ENCODE measurements at regions of chr10 and their contacts with region 1.

Region 1: GRCh38 chr10:44959247-44960087 is at the start of gene RASSF4:
- DNase-seq: peak; percentile 76 to 85 (median 79)
- H3K4me3 ChIP-seq: peak within 1 kb of the TSS; percentile 83 to 96 (median 91)
- H3K4me3 Mint-ChIP-seq: peak within 1 kb of the TSS; percentile 90 to 99
- H3K27ac ChIP-seq: peak within 1 kb of the TSS; percentile 77 to 81
- H3K27ac Mint-ChIP-seq: peak within 1 kb of the TSS; percentile 83 to 96 (median 95)
- H3K4me1 ChIP-seq: peaks cover 72 to 85% of the 10 kb centered on the region in 2 donors
- H3K4me1 Mint-ChIP-seq: peaks cover 80% of the 10 kb centered on the region
- H3K27me3 ChIP-seq: no peaks in the 10 kb centered on the region
- H3K27me3 Mint-ChIP-seq: peaks cover 0 to 1% (median 0%) of the 10 kb centered on the region in 3 donors
- CTCF ChIP-seq: no peak
- polyA plus RNA-seq, gene RASSF4: 117 to 290 (median 120) TPM

Region 2: GRCh38 chr10:44908066-44908749 is 51.3 kb before region 1 on chr10:
- intact Hi-C with region 1: no loop called
- DNase-seq: no peak
- H3K4me3 ChIP-seq: no peak overlapping the region
- H3K4me3 Mint-ChIP-seq: no peak overlapping the region
- H3K27ac ChIP-seq: no peak overlapping the region
- H3K27ac Mint-ChIP-seq: peak overlapping the region in 1 of 7 donors; percentile 21
- H3K4me1 ChIP-seq: peaks cover 12 to 26% of the 10 kb centered on the region in 2 donors
- H3K4me1 Mint-ChIP-seq: peaks cover 26% of the 10 kb centered on the region
- H3K27me3 ChIP-seq: no peaks in the 10 kb centered on the region
- H3K27me3 Mint-ChIP-seq: peaks cover 0 to 5% (median 2%) of the 10 kb centered on the region in 3 donors
- CTCF ChIP-seq: no peak

Region 3: DNA sequence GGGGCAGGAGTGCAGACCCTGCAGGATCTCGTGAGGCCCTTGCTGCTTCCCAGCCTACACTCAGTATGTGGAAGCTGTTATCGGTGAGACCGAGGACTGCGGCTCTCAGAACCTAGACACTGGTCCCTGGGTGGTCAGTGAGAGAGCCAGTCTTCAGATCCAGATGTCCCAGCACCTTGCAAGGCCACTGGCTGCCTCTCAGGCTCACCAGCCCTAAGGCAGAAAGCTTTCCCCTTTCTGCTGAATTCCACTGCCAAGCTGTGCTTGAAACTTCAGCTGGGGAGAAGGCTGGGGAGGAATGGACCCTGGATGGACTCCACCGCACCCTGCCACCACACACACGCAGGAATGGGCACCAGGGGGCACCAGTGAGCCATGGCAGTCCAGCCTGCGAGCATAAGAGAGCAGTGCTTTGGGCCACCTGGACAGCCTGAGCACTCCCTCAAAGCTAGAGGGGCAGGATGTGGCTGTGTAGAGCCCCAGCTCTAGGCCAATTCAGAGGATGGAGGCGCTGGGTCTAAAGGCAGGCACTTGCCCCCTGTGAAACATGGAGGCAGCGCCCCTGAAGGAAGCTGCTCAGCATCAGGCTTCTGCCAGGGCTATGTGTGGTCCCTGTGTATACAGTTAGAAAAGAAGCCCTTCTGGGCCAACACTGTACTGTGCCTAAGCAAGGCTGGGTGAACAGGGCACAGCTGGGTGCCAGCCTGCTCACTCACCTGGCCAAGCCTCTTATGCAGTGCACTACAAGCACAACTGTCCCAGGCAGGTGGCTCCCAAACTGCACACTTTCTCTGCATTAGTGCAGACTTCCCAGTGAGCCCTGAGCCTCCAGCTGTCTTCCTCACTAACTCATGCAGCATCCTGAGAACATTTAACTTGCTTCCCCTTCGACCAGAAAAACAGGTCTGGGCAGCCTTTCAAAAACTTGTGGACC is 26.7 kb before region 1 on chr10:
- intact Hi-C with region 1: no loop called
- DNase-seq: peak; percentile 74 to 81 (median 79)
- H3K4me3 ChIP-seq: no peak overlapping the region
- H3K4me3 Mint-ChIP-seq: no peak overlapping the region
- H3K27ac ChIP-seq: no peak overlapping the region
- H3K27ac Mint-ChIP-seq: peak overlapping the region in 2 of 7 donors; percentile 60 to 64
- H3K4me1 ChIP-seq: peaks cover 54 to 58% of the 10 kb centered on the region in 2 donors
- H3K4me1 Mint-ChIP-seq: peaks cover 51% of the 10 kb centered on the region
- H3K27me3 ChIP-seq: no peaks in the 10 kb centered on the region
- H3K27me3 Mint-ChIP-seq: peaks cover 0 to 5% (median 0%) of the 10 kb centered on the region in 3 donors
- CTCF ChIP-seq: peak; percentile 97

Region 4: DNA sequence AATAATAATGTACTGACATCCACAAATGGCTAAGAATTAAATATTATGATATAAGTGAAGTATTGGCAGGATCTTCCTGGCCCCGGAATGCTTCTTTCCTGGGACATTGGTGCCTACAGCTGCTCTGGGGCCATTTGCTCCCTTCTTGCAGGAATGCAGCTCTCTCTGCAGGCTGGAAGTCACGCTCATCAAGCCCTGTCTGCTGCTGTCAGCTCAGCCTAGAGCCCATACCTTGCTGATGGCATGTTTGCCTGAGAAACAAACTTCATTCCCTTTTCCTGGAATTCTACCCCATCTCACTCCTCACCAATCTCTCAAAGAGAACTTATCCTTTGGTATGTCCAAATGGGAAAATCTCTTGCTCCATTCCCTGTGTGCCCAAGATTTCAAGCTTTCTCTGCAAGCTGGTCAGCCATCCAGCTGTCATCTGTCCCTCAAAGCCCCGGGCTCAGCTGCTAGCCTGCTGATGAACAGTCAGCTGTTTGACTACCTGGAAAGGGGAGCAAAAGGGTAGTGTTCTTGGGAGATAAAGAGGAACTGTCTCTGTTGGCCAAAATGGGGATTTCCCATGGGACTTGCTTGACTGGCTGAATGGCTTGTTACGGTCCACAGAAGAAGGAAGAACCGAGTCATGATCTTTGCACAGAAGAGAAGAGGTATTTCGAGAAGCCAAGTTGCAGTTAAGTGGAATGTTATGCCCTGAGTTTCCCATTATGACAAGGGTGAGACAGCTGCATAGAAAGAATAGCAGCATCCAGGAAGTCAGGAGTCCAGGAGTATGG is 11.9 kb before region 1 on chr10:
- intact Hi-C with region 1: loop called in 1 of 2 experiments (anchors 2 kb)
- DNase-seq: peak; percentile 77 to 96 (median 83)
- H3K4me3 ChIP-seq: peak overlapping the region in 1 of 3 experiments; percentile 38
- H3K4me3 Mint-ChIP-seq: peak overlapping the region in 1 of 2 donors; percentile 69
- H3K27ac ChIP-seq: peak overlapping the region; percentile 66 to 76
- H3K27ac Mint-ChIP-seq: peak overlapping the region; percentile 69 to 93 (median 89)
- H3K4me1 ChIP-seq: peaks cover 52 to 59% of the 10 kb centered on the region in 2 donors
- H3K4me1 Mint-ChIP-seq: peaks cover 60% of the 10 kb centered on the region
- H3K27me3 ChIP-seq: no peaks in the 10 kb centered on the region
- H3K27me3 Mint-ChIP-seq: peaks cover 0 to 4% (median 0%) of the 10 kb centered on the region in 3 donors
- CTCF ChIP-seq: no peak

Region 5: DNA sequence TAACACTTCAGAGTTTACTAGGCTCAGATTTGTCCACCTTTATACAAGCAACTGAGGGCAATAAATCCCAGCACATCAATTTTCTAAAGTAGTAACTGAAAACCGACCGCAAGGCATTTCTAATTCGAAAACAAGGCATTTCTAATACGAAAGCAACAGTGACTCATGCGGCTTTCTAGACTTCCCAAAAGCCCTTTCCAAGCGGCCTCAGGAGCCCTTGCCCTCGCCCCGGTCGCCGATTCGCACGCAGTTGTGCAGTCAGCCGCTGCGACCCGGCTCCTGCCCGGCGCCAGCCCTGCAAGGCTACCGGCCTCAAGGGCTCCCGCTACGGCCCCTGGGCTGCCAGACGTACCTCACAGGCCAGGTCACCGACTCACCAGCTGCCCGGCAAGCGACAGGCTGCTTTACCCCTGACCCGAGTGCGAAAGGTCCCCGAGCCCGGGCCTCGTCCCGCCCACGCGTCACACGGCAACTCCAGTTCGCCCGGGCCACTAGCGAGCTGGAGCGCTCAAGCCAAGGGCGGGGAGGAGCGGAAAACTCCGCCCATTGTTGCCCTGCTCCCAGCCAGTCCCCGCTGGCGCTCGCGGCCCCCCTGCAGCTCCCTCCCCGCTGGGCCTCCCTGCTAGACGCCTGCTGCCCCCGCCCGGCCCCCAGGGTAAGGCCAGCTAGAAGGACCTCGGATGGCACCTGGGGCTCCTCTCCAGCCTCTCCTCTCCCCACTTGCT is 1063.7 kb after region 1 on chr10:
- intact Hi-C with region 1: loop called in 1 of 2 experiments (anchors 10 kb)
- DNase-seq: peak; percentile 94 to 97 (median 96)
- H3K4me3 ChIP-seq: peak overlapping the region; percentile 66 to 91 (median 76)
- H3K4me3 Mint-ChIP-seq: peak overlapping the region; percentile 91 to 95
- H3K27ac ChIP-seq: peak overlapping the region; percentile 92 to 93
- H3K27ac Mint-ChIP-seq: peak overlapping the region; percentile 94 to 98 (median 97)
- H3K4me1 ChIP-seq: peaks cover 62 to 86% of the 10 kb centered on the region in 2 donors
- H3K4me1 Mint-ChIP-seq: peaks cover 73% of the 10 kb centered on the region
- H3K27me3 ChIP-seq: no peaks in the 10 kb centered on the region
- H3K27me3 Mint-ChIP-seq: no peaks in the 10 kb centered on the region
- CTCF ChIP-seq: peak; percentile 60